ENCODE measurements at regions of chr1 and their contacts with region 1.

Region 1: GRCh38 chr1:52141513-52142219 is at the start of gene ZFYVE9:
- DNase-seq: no peak
- H3K4me3 ChIP-seq: peak within 1 kb of the TSS; percentile 90
- H3K27ac ChIP-seq: peak within 1 kb of the TSS; percentile 100
- H3K4me1 ChIP-seq: peaks cover 53% of the 10 kb centered on the region
- H3K27me3 ChIP-seq: no peaks in the 10 kb centered on the region
- CTCF ChIP-seq: peak; percentile 39 to 42 (median 41)
- POLR2A ChIP-seq: peak in 1 of 2 donors; percentile 13
- total RNA-seq, gene ZFYVE9: 30.2 TPM

Region 2: GRCh38 chr1:52404116-52404986 is 262.7 kb after region 1 on chr1 and contains the starts of genes ORC1 and PRPF38A:
- intact Hi-C with region 1: loop called (anchors 10 kb)
- DNase-seq: peak in 1 of 2 donors; percentile 97
- H3K4me3 ChIP-seq: peak within 1 kb of the TSS; percentile 87 to 93
- H3K27ac ChIP-seq: peak within 1 kb of the TSS; percentile 89
- H3K4me1 ChIP-seq: peaks cover 22% of the 10 kb centered on the region
- H3K27me3 ChIP-seq: no peaks in the 10 kb centered on the region
- CTCF ChIP-seq: no peak
- POLR2A ChIP-seq: peak in 1 of 2 donors; percentile 27
- total RNA-seq, gene ORC1: 1.7 TPM
- total RNA-seq, gene PRPF38A: 17.7 TPM

Region 3: GRCh38 chr1:52691821-52692220 is 550.2 kb after region 1 on chr1:
- intact Hi-C with region 1: loop called (anchors 5 kb)
- DNase-seq: no peak
- H3K4me3 ChIP-seq: no peak overlapping the region
- H3K27ac ChIP-seq: no peak overlapping the region
- H3K4me1 ChIP-seq: peaks cover 2% of the 10 kb centered on the region
- H3K27me3 ChIP-seq: no peaks in the 10 kb centered on the region
- CTCF ChIP-seq: no peak
- POLR2A ChIP-seq: no peak